ENCODE measurements at regions of chr14 and their contacts with region 1.

Region 1: GRCh38 chr14:68248481-68249255 is 429.1 kb downstream of the RAD51B start:
- DNase-seq: peak; percentile 85
- H3K4me3 ChIP-seq: no peak overlapping the region
- H3K27ac ChIP-seq: peak overlapping the region; percentile 16
- H3K4me1 ChIP-seq: peaks cover 52% of the 10 kb centered on the region
- H3K27me3 ChIP-seq: no peaks in the 10 kb centered on the region
- CTCF ChIP-seq: peak; percentile 22 to 29
- POLR2A ChIP-seq: no peak

Region 2: DNA sequence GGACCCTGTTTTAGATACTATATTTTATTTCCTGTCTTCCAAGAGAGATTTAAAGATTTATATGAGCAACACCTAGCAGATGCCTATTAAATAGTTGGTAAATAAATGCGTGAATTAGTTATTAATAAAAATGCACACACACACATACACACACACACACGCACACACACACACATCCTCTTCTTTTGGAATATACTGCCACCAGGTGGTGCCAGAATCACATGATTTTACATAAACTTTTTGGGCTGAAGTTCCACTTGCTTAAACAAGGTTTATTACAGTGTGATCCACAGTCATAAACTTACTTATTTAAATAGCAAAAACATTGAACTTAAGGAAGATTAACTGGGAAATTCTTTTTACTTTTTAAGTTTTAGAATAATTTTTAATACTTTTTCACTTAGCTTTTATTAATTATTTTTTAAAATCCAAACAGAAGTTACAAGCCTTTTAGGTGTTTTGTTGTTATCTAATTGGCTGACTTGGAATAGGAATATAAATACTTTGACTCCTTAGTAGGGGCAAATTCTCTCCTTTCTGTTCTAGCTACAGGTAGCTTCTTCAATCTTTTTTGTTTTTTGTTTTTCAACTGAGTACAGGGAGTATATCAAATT is 411.6 kb before region 1 on chr14:
- CTCF ChIA-PET with region 1: interaction called, 3 read pairs
- POLR2A ChIA-PET with region 1: no interaction called
- dilution Hi-C with region 1: no loop called
- intact Hi-C with region 1: loop called (anchors 5 kb)
- DNase-seq: peak; percentile 82
- H3K4me3 ChIP-seq: no peak overlapping the region
- H3K27ac ChIP-seq: no peak overlapping the region
- H3K4me1 ChIP-seq: no peaks in the 10 kb centered on the region
- H3K27me3 ChIP-seq: no peaks in the 10 kb centered on the region
- CTCF ChIP-seq: peak; percentile 40 to 49
- POLR2A ChIP-seq: no peak

Region 3: DNA sequence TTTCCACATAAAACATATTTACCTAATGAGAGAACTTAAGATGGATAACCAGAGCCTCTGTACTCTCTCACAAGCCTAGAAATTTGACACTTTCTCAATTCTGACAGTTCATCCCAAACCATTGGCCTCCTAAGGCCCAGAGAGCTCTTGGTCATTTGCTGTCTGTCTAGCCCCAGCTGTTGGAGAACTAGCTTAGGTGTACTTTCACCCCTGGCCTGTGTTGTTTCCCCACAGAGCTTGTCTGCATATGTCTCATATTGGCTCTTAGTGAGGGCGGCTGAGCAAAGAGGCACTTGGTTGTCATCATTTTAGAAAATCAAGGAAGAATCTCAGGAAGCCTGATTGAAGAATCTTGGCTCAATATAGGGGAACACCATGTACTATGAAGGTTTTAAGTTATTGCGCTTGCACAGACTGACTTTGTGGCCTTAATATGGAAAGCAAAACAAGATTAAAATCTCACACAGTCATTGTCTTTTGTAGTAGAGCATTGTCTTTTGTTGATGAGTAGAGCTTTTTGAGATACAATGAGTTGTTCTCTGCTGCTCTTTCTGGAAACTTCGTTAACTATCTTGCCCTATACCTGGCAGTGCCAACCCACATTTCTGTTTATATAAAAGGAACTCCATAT is 104.5 kb before region 1 on chr14:
- CTCF ChIA-PET with region 1: no interaction called
- POLR2A ChIA-PET with region 1: no interaction called
- dilution Hi-C with region 1: no loop called
- intact Hi-C with region 1: loop called (anchors 2 kb)
- DNase-seq: peak; percentile 32
- H3K4me3 ChIP-seq: no peak overlapping the region
- H3K27ac ChIP-seq: no peak overlapping the region
- H3K4me1 ChIP-seq: peaks cover 35% of the 10 kb centered on the region
- H3K27me3 ChIP-seq: no peaks in the 10 kb centered on the region
- CTCF ChIP-seq: no peak
- POLR2A ChIP-seq: no peak

Region 4: GRCh38 chr14:68557648-68558047 is 309.0 kb after region 1 on chr14:
- CTCF ChIA-PET with region 1: interaction called, 3 read pairs
- POLR2A ChIA-PET with region 1: interaction called, 3 read pairs
- dilution Hi-C with region 1: no loop called
- intact Hi-C with region 1: loop called (anchors 5 kb)
- DNase-seq: peak; percentile 59
- H3K4me3 ChIP-seq: no peak overlapping the region
- H3K27ac ChIP-seq: no peak overlapping the region
- H3K4me1 ChIP-seq: peaks cover 33% of the 10 kb centered on the region
- H3K27me3 ChIP-seq: no peaks in the 10 kb centered on the region
- CTCF ChIP-seq: no peak
- POLR2A ChIP-seq: no peak

Region 5: GRCh38 chr14:68685419-68686204 is 436.9 kb after region 1 on chr14:
- CTCF ChIA-PET with region 1: interaction called, 12 read pairs
- POLR2A ChIA-PET with region 1: no interaction called
- dilution Hi-C with region 1: no loop called
- intact Hi-C with region 1: loop called (anchors 1 kb)
- DNase-seq: no peak
- H3K4me3 ChIP-seq: no peak overlapping the region
- H3K27ac ChIP-seq: no peak overlapping the region
- H3K4me1 ChIP-seq: peaks cover 43% of the 10 kb centered on the region
- H3K27me3 ChIP-seq: no peaks in the 10 kb centered on the region
- CTCF ChIP-seq: no peak
- POLR2A ChIP-seq: no peak

Region 6: GRCh38 chr14:68795597-68796417 is 547.1 kb after region 1 on chr14:
- CTCF ChIA-PET with region 1: interaction called, 122 read pairs
- POLR2A ChIA-PET with region 1: interaction called, 13 read pairs
- dilution Hi-C with region 1: no loop called
- intact Hi-C with region 1: loop called (anchors 1 kb)
- DNase-seq: peak; percentile 75
- H3K4me3 ChIP-seq: peak overlapping the region; percentile 59 to 72 (median 72)
- H3K27ac ChIP-seq: peak overlapping the region; percentile 98
- H3K4me1 ChIP-seq: peaks cover 14% of the 10 kb centered on the region
- H3K27me3 ChIP-seq: no peaks in the 10 kb centered on the region
- CTCF ChIP-seq: peak; percentile 42 to 68
- POLR2A ChIP-seq: peak; percentile 1

Region 7: GRCh38 chr14:68843471-68844209 is 595.0 kb after region 1 on chr14:
- CTCF ChIA-PET with region 1: interaction called, 18 read pairs
- POLR2A ChIA-PET with region 1: no interaction called
- dilution Hi-C with region 1: no loop called
- intact Hi-C with region 1: no loop called
- DNase-seq: peak; percentile 75
- H3K4me3 ChIP-seq: no peak overlapping the region
- H3K27ac ChIP-seq: no peak overlapping the region
- H3K4me1 ChIP-seq: peaks cover 14% of the 10 kb centered on the region
- H3K27me3 ChIP-seq: no peaks in the 10 kb centered on the region
- CTCF ChIP-seq: peak; percentile 92 to 95
- POLR2A ChIP-seq: no peak